Activated CD4-positive, alpha-beta memory T cell treated with anti-CD3 and anti-CD28 coated beads, Interleukin-2, amount 10 ng/mL, durations not matched to agents 7 days and 5 days (primary cell): ENCODE measurements at regions of chr22 and their contacts with region 1.

Region 1: GRCh38 chr22:42090596-42091454 is at the start of gene NDUFA6:
- DNase-seq: peak; percentile 99
- H3K4me3 Mint-ChIP-seq: peak within 1 kb of the TSS; percentile 99
- H3K27ac Mint-ChIP-seq: peak within 1 kb of the TSS; percentile 99
- H3K4me1 Mint-ChIP-seq: peaks cover 31% of the 10 kb centered on the region
- H3K27me3 Mint-ChIP-seq: no peaks in the 10 kb centered on the region
- total RNA-seq, gene NDUFA6: 94.8 to 97.1 TPM

Region 2: GRCh38 chr22:41966607-41967240 is 124.1 kb before region 1 on chr22:
- CTCF ChIA-PET with region 1: interaction called, 23 read pairs
- POLR2A ChIA-PET with region 1: interaction called, 16 read pairs
- DNase-seq: peak; percentile 54
- H3K4me3 Mint-ChIP-seq: no peak overlapping the region
- H3K27ac Mint-ChIP-seq: no peak overlapping the region
- H3K4me1 Mint-ChIP-seq: peaks cover 6% of the 10 kb centered on the region
- H3K27me3 Mint-ChIP-seq: peaks cover 2% of the 10 kb centered on the region

Region 3: GRCh38 chr22:42052765-42053164 is 38.1 kb before region 1 on chr22:
- CTCF ChIA-PET with region 1: no interaction called
- POLR2A ChIA-PET with region 1: no interaction called
- DNase-seq: no peak
- H3K4me3 Mint-ChIP-seq: no peak overlapping the region
- H3K27ac Mint-ChIP-seq: no peak overlapping the region
- H3K4me1 Mint-ChIP-seq: no peaks in the 10 kb centered on the region
- H3K27me3 Mint-ChIP-seq: no peaks in the 10 kb centered on the region

Region 4: GRCh38 chr22:42070517-42071422 is 20.1 kb before region 1 on chr22 and contains the start of gene NAGA:
- CTCF ChIA-PET with region 1: interaction called, 10 read pairs
- POLR2A ChIA-PET with region 1: interaction called, 55 read pairs
- DNase-seq: peak; percentile 95
- H3K4me3 Mint-ChIP-seq: peak within 1 kb of the TSS; percentile 88
- H3K27ac Mint-ChIP-seq: peak within 1 kb of the TSS; percentile 86
- H3K4me1 Mint-ChIP-seq: peaks cover 55% of the 10 kb centered on the region
- H3K27me3 Mint-ChIP-seq: no peaks in the 10 kb centered on the region
- total RNA-seq, gene NAGA: 33.7 to 35.0 TPM

Region 5: GRCh38 chr22:42101199-42101598 is 10.4 kb after region 1 on chr22:
- CTCF ChIA-PET with region 1: interaction called, 8 read pairs
- POLR2A ChIA-PET with region 1: interaction called, 10 read pairs
- DNase-seq: no peak
- H3K4me3 Mint-ChIP-seq: no peak overlapping the region
- H3K27ac Mint-ChIP-seq: no peak overlapping the region
- H3K4me1 Mint-ChIP-seq: no peaks in the 10 kb centered on the region
- H3K27me3 Mint-ChIP-seq: no peaks in the 10 kb centered on the region

Region 6: DNA sequence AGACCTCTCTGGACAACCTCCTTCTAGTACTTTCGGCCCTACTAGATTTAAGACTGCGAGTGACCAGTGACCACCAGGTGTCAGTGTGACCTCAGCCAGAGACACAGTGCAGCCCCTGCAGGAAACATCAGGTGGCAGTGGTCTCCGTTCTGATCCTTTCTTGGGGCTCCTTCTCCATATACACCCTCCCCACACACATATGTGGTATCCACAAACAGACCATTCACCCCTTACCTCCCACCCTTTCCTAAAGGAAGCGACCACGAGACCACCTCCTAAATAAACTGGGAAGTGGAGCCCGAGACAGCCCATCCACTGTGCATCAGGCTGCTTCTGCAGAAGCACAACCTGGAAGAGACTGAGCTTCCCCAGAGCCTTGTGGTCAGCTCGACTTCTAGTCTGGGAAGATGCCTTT is 78.2 kb after region 1 on chr22:
- CTCF ChIA-PET with region 1: interaction called, 9 read pairs
- POLR2A ChIA-PET with region 1: interaction called, 12 read pairs
- DNase-seq: peak; percentile 77
- H3K4me3 Mint-ChIP-seq: no peak overlapping the region
- H3K27ac Mint-ChIP-seq: no peak overlapping the region
- H3K4me1 Mint-ChIP-seq: peaks cover 22% of the 10 kb centered on the region
- H3K27me3 Mint-ChIP-seq: no peaks in the 10 kb centered on the region

Region 7: DNA sequence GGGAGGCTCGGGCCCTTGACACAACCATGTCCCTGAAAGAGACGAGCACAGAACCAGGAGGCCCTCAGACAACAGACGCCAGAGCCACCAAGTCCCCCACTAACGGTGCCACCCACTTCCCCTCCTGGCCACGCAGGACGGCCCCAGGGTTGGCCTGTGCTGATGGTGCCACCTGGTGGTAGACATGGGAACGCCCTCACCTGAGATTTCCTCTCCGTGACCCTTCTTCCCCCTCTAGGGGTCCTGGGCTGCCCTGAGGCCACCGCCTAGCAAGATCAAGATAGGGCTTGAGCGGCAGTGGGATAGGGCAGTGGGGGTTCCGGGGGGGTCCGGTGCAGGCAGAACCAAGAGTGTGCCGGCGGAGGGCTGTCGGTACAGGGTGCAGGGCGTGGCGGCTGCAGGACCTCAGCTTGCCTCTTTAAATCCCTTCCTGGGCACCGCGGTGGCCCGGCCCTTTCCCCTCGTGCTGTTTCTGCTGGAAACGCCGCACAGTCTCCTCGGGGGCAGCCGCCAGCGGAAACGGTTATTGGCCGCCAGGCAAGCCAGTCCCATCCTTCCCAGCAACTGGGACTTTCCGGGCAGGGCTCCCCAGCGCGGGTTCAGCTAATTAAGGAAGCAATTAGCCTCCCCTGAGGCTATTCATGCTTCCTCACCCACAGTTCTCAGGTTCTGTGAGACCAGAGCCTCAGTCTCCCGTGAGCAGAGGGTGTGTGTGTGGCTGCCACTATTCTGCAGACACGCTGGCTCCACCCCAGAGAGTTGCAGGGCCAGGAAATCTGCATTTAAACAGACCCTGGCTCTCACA is 346.9 kb after region 1 on chr22:
- CTCF ChIA-PET with region 1: interaction called, 47 read pairs
- POLR2A ChIA-PET with region 1: interaction called, 47 read pairs
- DNase-seq: peak; percentile 86
- H3K4me3 Mint-ChIP-seq: peak overlapping the region; percentile 79
- H3K27ac Mint-ChIP-seq: peak overlapping the region; percentile 61
- H3K4me1 Mint-ChIP-seq: peaks cover 27% of the 10 kb centered on the region
- H3K27me3 Mint-ChIP-seq: peaks cover 6% of the 10 kb centered on the region